HEK293 (cell line): ENCODE measurements at regions of chr7 and their contacts with region 1.

Region 1: GRCh38 chr7:151315038-151315655 is 26.5 kb upstream of the NUB1 start:
- H3K4me3 ChIP-seq: no peak overlapping the region
- H3K27ac ChIP-seq: no peak overlapping the region
- H3K4me1 ChIP-seq: no peaks in the 10 kb centered on the region
- CTCF ChIP-seq: no peak; the same call in 1 of the 2 replicates

Region 2: DNA sequence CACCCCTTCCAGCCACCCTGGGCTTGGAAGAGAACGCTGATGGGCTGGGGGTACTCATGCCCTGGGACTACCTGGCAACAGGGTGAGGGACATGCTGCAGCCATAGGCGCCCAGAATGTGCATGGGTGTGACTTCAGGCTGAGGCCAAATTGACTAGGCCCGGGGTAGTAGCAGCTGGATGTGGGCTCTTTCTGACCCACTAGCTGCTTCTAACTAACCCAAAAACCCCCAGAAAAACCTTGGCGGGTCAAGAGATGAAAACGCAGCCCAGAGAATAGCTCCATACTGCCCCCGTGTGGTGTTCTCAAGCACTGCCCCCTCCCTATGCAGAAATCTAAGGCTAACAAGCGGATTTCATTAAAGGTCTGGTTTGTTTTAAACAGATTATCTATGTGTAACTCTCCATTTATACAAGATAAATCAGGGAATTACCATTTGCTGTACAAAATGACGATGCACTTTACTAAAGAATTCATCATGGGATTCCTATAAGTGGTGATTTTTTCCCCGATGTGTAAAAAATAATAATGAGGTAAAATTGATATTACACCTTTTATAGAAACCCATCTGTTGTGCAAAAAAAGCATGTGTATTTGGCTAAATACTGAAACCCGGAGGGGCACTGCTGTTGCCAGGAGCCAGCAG is 70.8 kb before region 1 on chr7:
- CTCF ChIA-PET with region 1: interaction called, 11 read pairs
- POLR2A ChIA-PET with region 1: no interaction called
- H3K4me3 ChIP-seq: no peak overlapping the region
- H3K27ac ChIP-seq: no peak overlapping the region
- H3K4me1 ChIP-seq: peaks cover 3% of the 10 kb centered on the region; the same call in 1 of the 2 replicates
- CTCF ChIP-seq: peak; percentile 45; the same call in 1 of the 2 replicates

Region 3: DNA sequence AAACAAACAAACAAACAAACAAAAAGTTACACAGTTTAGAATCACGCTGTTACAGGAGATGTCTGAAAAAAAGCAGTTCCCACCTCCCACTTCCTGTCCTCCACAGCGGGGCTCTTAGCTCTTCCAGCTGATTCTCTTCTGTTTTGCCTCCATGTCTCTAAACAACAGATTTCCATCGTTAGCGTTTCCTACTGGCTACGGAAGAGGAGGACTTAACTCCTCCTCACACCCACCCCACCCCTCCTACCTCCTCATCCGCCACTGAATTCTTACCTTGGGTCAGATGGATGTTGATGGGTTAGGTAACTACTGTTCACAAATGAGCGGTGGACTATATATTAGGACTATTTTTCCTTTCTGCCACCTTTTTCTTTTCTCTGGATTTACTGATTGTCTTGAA is 10.3 kb before region 1 on chr7:
- CTCF ChIA-PET with region 1: interaction called, 15 read pairs
- POLR2A ChIA-PET with region 1: no interaction called
- H3K4me3 ChIP-seq: no peak overlapping the region
- H3K27ac ChIP-seq: no peak overlapping the region
- H3K4me1 ChIP-seq: no peaks in the 10 kb centered on the region
- CTCF ChIP-seq: no peak

Region 4: GRCh38 chr7:151336027-151336708 is 21.0 kb after region 1 on chr7:
- CTCF ChIA-PET with region 1: interaction called, 35 read pairs
- POLR2A ChIA-PET with region 1: interaction called, 3 read pairs
- H3K4me3 ChIP-seq: no peak overlapping the region
- H3K27ac ChIP-seq: no peak overlapping the region
- H3K4me1 ChIP-seq: no peaks in the 10 kb centered on the region
- CTCF ChIP-seq: no peak

Region 5: GRCh38 chr7:151351027-151351426 is 35.9 kb after region 1 on chr7:
- CTCF ChIA-PET with region 1: interaction called, 157 read pairs
- POLR2A ChIA-PET with region 1: no interaction called
- H3K4me3 ChIP-seq: no peak overlapping the region
- H3K27ac ChIP-seq: no peak overlapping the region
- H3K4me1 ChIP-seq: no peaks in the 10 kb centered on the region
- CTCF ChIP-seq: no peak

Region 6: DNA sequence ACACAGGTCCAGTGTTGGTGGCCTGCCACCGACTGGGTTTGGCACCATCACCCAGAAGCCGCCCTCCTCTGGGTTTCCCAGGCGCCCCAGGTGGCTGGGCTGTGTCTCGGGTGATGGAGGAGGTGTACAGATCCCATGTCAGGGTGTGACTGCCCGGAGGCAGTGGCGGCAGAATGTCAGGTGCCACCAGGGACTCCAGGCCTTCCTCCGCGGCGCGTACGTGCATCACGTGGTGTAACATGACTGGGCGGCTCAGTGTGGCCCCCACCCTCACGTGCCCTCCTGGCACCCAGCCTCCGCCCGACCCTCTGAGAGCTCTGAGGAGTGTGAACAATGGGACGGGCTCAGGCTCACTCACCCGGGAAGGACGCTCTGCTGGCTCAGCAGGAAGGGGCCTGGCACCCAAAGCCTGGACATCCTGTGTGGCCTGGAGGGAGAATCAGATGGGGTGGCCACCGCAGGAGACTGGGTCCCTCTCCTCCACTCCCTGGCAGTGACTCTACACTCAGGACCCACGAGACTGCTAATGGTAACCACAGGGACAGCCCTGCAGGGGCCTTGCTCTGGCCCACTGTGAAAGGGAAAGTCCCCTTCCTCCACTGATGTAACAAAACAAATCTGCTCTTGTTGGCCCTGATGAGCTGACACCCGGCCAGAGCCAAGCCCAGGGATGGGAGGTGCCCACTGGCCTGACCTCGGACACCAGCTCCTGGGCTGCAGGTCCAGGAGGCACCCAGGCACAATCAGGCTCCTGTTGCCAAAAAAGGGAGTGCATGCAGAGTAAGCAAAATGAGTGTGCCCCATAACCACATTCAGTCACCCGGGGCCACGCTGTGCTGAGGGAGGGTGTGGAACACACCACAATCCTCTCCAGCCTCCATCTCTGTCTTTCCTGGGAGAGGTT is 397.0 kb after region 1 on chr7:
- CTCF ChIA-PET with region 1: no interaction called
- POLR2A ChIA-PET with region 1: no interaction called
- H3K4me3 ChIP-seq: no peak overlapping the region
- H3K27ac ChIP-seq: no peak overlapping the region
- H3K4me1 ChIP-seq: no peaks in the 10 kb centered on the region
- CTCF ChIP-seq: no peak